Ovary (tissue), 10 donors: ENCODE measurements at regions of chr12 and their contacts with region 1.

Region 1: GRCh38 chr12:50074936-50075807 is 10.0 kb upstream of the SMARCD1 start:
- DNase-seq: peak; percentile 78 to 90 (median 88)
- H3K4me3 ChIP-seq: no peak overlapping the region
- H3K27ac ChIP-seq: no peak overlapping the region
- H3K4me1 ChIP-seq: no peaks in the 10 kb centered on the region
- H3K27me3 ChIP-seq: no peaks in the 10 kb centered on the region
- CTCF ChIP-seq: peak; percentile 87 to 96 (median 92)
- EP300 ChIP-seq: no peak
- POLR2A ChIP-seq: no peak

Region 2: GRCh38 chr12:49507139-49507538 is 568.0 kb before region 1 on chr12:
- intact Hi-C with region 1: no loop called
- DNase-seq: no peak
- H3K4me3 ChIP-seq: no peak overlapping the region
- H3K27ac ChIP-seq: no peak overlapping the region
- H3K4me1 ChIP-seq: no peaks in the 10 kb centered on the region
- H3K27me3 ChIP-seq: no peaks in the 10 kb centered on the region
- CTCF ChIP-seq: no peak
- EP300 ChIP-seq: no peak
- POLR2A ChIP-seq: no peak

Region 3: DNA sequence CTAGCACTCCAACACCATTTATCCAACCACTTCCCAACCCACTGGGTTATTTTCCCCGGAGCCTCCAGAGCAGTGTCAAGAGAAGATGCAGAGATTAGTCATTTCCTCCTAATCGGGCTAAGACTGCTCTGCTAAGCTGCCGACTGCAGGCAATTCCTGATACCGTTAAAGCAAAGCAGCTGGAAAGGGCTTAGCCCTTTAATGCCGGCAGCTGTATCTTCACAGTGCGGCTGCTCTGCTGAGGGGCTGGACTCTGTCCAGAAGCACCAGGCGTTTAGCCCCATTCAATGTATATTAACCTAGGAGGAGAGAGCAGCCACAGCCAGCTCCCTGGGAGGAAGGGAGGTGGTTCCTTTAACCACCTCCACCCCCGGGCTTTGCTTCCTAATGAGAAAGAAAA is 91.3 kb before region 1 on chr12:
- intact Hi-C with region 1: no loop called
- DNase-seq: no peak
- H3K4me3 ChIP-seq: no peak overlapping the region
- H3K27ac ChIP-seq: no peak overlapping the region
- H3K4me1 ChIP-seq: no peaks in the 10 kb centered on the region
- H3K27me3 ChIP-seq: no peaks in the 10 kb centered on the region
- CTCF ChIP-seq: no peak
- EP300 ChIP-seq: no peak
- POLR2A ChIP-seq: no peak

Region 4: GRCh38 chr12:50174971-50175715 is 100.0 kb after region 1 on chr12:
- intact Hi-C with region 1: loop called (anchors 2 to 5 kb)
- DNase-seq: no peak
- H3K4me3 ChIP-seq: no peak overlapping the region
- H3K27ac ChIP-seq: no peak overlapping the region
- H3K4me1 ChIP-seq: no peaks in the 10 kb centered on the region
- H3K27me3 ChIP-seq: no peaks in the 10 kb centered on the region
- CTCF ChIP-seq: peak; percentile 41 to 78 (median 77)
- EP300 ChIP-seq: no peak
- POLR2A ChIP-seq: peak; percentile 16